Caco-2 (cell line): ENCODE measurements at regions of chr17 and their contacts with region 1.

Region 1: GRCh38 chr17:19648475-19649406 is at the start of gene ALDH3A2:
- DNase-seq: peak; percentile 99
- H3K4me3 ChIP-seq: peak within 1 kb of the TSS; percentile 60
- H3K4me3 Mint-ChIP-seq: peak within 1 kb of the TSS; percentile 99
- H3K27ac Mint-ChIP-seq: peak within 1 kb of the TSS; percentile 99
- H3K4me1 ChIP-seq: peaks cover 60% of the 10 kb centered on the region
- H3K4me1 Mint-ChIP-seq: peaks cover 51% of the 10 kb centered on the region
- H3K27me3 ChIP-seq: no peaks in the 10 kb centered on the region
- H3K27me3 Mint-ChIP-seq: no peaks in the 10 kb centered on the region
- CTCF ChIP-seq: peak in 1 of 2 experiments; percentile 52
- total RNA-seq, gene ALDH3A2: 71.9 and 84.0 TPM in 2 replicates

Region 2: GRCh38 chr17:19507775-19508576 is 140.8 kb before region 1 on chr17:
- CTCF ChIA-PET with region 1: interaction called, 4 read pairs
- POLR2A ChIA-PET with region 1: no interaction called
- intact Hi-C with region 1: loop called (anchors 2 kb)
- DNase-seq: peak; percentile 93 to 94
- H3K4me3 ChIP-seq: peak overlapping the region; percentile 98
- H3K4me3 Mint-ChIP-seq: peak overlapping the region; percentile 78
- H3K27ac Mint-ChIP-seq: peak overlapping the region; percentile 95
- H3K4me1 ChIP-seq: no peaks in the 10 kb centered on the region
- H3K4me1 Mint-ChIP-seq: peaks cover 11% of the 10 kb centered on the region
- H3K27me3 ChIP-seq: no peaks in the 10 kb centered on the region
- H3K27me3 Mint-ChIP-seq: peaks cover 2% of the 10 kb centered on the region
- CTCF ChIP-seq: peak in 1 of 2 experiments; percentile 3

Region 3: GRCh38 chr17:19546289-19547065 is 102.3 kb before region 1 on chr17:
- CTCF ChIA-PET with region 1: interaction called, 11 read pairs
- POLR2A ChIA-PET with region 1: no interaction called
- intact Hi-C with region 1: loop called (anchors 5 kb)
- DNase-seq: peak; percentile 30 to 57
- H3K4me3 ChIP-seq: no peak overlapping the region
- H3K4me3 Mint-ChIP-seq: no peak overlapping the region
- H3K27ac Mint-ChIP-seq: no peak overlapping the region
- H3K4me1 ChIP-seq: peaks cover 35% of the 10 kb centered on the region
- H3K4me1 Mint-ChIP-seq: peaks cover 13% of the 10 kb centered on the region
- H3K27me3 ChIP-seq: no peaks in the 10 kb centered on the region
- H3K27me3 Mint-ChIP-seq: no peaks in the 10 kb centered on the region
- CTCF ChIP-seq: peak in 1 of 2 experiments; percentile 41

Region 4: GRCh38 chr17:19660219-19660870 is 11.6 kb after region 1 on chr17:
- CTCF ChIA-PET with region 1: interaction called, 7 read pairs
- POLR2A ChIA-PET with region 1: interaction called, 15 read pairs
- intact Hi-C with region 1: loop called (anchors 1 kb)
- DNase-seq: peak in 1 of 2 experiments; percentile 41
- H3K4me3 ChIP-seq: no peak overlapping the region
- H3K4me3 Mint-ChIP-seq: no peak overlapping the region
- H3K27ac Mint-ChIP-seq: peak overlapping the region; percentile 6
- H3K4me1 ChIP-seq: peaks cover 14% of the 10 kb centered on the region
- H3K4me1 Mint-ChIP-seq: peaks cover 33% of the 10 kb centered on the region
- H3K27me3 ChIP-seq: no peaks in the 10 kb centered on the region
- H3K27me3 Mint-ChIP-seq: no peaks in the 10 kb centered on the region
- CTCF ChIP-seq: no peak

Region 5: DNA sequence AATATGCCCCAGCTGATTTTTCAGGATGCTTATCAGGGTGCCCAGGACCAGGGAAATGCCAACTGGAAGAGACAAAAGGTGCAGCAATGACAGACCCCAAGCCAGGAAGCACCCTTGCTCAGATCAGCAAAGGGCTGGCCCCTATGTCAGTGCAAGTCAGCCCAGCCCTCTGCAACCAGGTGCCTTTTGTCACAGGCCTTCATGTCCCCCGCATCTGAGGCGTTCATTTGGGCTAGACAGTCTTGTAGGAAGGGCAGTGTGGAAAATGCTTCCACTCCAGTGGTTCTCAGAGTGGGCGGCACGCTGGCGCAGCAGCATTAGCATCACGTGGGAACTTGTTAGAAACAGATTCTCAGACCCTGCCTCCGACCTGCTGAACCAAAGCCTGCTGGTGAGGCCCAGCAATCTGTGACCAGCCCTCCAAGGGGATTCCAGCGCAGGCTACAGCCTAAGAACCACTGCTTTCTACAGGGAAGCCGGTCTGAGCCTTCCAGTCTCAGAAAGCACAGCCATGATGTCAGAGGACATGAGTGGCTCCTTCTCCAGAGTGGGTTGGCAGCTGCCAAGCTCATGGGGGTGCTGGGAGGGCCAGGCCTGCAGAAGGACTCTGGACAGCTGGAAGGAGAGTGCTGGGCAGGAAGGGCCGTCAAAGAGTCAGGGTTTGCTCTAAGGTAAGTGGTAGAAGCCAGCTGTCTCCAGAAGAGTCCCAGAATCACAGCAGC is 54.5 kb after region 1 on chr17:
- CTCF ChIA-PET with region 1: interaction called, 5 read pairs
- POLR2A ChIA-PET with region 1: no interaction called
- intact Hi-C with region 1: loop called (anchors 5 kb)
- DNase-seq: no peak
- H3K4me3 ChIP-seq: no peak overlapping the region
- H3K4me3 Mint-ChIP-seq: peak overlapping the region; percentile 9
- H3K27ac Mint-ChIP-seq: no peak overlapping the region
- H3K4me1 ChIP-seq: peaks cover 13% of the 10 kb centered on the region
- H3K4me1 Mint-ChIP-seq: peaks cover 16% of the 10 kb centered on the region
- H3K27me3 ChIP-seq: no peaks in the 10 kb centered on the region
- H3K27me3 Mint-ChIP-seq: no peaks in the 10 kb centered on the region
- CTCF ChIP-seq: no peak